Activated B cell treated with CpG ODN at 0.5 μM for 24 hours (primary cell): ENCODE measurements at regions of chr10 and their contacts with region 1.

Region 1: DNA sequence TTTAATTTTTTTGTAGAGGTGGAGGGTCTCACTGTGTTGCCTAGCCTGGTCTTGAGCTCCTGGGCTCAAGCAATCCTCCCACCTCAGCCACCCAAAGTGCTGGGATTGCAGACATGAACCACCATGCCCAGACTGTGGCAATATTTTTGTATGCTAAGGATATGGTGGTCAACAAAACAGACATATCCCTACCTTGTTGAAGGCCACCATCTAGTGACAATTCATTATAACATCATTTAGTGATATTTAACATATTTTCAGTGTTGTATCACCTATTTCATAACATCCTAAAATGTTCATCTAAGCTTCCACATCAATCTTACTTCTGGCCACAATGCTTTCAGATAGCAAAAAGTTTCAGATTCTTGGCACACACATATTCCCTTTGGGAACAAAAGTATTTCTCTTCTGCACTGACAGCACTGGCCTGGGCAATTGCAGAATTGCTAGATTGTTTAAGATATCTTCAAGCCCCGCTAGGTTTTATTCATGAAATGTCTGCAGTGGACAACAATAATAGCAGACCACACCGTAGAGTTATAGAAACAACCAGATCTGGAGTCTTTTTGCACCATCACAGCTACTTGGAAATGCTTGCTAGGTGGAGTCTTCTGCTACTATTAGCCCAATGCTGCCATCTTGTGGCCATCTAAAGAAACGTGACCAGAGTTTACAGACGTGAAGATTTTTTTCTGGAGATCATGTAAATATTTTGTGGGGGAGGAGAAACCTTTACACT is 58.4 kb downstream of the DNAJC12 start:
- DNase-seq: no peak
- ATAC-seq: peak; percentile 83
- H3K4me3 Mint-ChIP-seq: no peak overlapping the region
- H3K27ac Mint-ChIP-seq: peak overlapping the region; percentile 0
- H3K4me1 Mint-ChIP-seq: peaks cover 36% of the 10 kb centered on the region
- H3K27me3 Mint-ChIP-seq: no peaks in the 10 kb centered on the region
- CTCF ChIP-seq: no peak

Region 2: DNA sequence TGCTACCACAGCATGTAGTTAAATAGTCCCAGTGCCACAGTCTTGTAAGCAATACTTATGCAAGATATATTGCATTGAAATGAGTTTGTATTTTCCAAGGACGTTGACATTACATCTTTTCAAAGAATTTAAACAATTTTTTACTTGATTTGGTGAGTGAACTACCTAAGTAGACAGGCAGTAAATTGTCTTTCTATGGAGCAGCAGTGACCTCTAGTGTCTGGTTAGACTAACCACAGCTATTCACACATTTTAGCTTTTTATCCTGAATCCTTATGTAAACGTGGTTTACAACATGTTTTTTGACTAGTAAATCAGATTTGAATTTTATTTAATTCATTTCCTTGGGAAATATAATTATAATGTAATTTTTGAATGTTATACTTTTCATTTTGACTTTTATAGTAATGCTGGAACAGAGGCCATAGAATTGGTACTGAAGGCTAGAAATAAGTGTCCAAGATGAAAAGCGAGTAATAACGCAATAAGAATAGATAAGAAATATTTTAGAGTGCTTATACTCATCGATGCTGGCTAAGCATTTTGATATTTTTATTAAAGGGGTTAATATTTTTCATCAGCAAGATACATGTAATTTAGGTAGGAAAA is 848.2 kb before region 1 on chr10:
- CTCF ChIA-PET with region 1: interaction called, 3 read pairs
- POLR2A ChIA-PET with region 1: no interaction called
- intact Hi-C with region 1: loop called (anchors 5 kb)
- DNase-seq: no peak
- ATAC-seq: no peak
- H3K4me3 Mint-ChIP-seq: no peak overlapping the region
- H3K27ac Mint-ChIP-seq: no peak overlapping the region
- H3K4me1 Mint-ChIP-seq: no peaks in the 10 kb centered on the region
- H3K27me3 Mint-ChIP-seq: peaks cover 21% of the 10 kb centered on the region
- CTCF ChIP-seq: peak; percentile 85

Region 3: DNA sequence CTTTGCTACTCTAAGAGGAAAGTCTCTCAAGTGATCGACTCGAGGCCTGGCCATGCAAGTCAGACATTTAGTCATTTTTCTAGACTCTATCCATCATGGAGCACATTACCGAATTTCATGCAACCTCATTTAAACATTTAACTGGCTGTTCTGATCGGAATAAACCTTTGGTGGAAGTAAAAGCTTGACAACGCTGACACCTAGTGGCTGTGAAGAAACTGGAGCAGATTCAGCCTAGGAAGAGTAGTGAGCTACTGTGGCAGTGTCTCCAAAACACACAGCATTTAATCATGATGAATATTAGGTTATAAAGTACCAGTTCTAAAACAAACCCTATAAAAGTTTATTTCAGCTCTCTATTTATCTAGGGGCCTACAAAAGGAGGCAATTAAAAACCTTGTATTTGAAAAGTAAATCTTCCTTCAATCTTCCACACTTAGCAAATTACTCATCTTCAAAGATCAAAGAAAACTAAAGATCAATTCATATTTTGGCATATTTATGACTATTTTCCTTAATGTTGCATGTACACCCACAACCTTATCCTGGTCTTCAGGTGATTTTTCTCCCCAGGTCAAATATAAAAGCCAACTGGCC is 258.6 kb before region 1 on chr10:
- CTCF ChIA-PET with region 1: interaction called, 3 read pairs
- POLR2A ChIA-PET with region 1: no interaction called
- intact Hi-C with region 1: loop called (anchors 2 kb)
- DNase-seq: no peak
- ATAC-seq: no peak
- H3K4me3 Mint-ChIP-seq: no peak overlapping the region
- H3K27ac Mint-ChIP-seq: no peak overlapping the region
- H3K4me1 Mint-ChIP-seq: no peaks in the 10 kb centered on the region
- H3K27me3 Mint-ChIP-seq: no peaks in the 10 kb centered on the region
- CTCF ChIP-seq: no peak

Region 4: DNA sequence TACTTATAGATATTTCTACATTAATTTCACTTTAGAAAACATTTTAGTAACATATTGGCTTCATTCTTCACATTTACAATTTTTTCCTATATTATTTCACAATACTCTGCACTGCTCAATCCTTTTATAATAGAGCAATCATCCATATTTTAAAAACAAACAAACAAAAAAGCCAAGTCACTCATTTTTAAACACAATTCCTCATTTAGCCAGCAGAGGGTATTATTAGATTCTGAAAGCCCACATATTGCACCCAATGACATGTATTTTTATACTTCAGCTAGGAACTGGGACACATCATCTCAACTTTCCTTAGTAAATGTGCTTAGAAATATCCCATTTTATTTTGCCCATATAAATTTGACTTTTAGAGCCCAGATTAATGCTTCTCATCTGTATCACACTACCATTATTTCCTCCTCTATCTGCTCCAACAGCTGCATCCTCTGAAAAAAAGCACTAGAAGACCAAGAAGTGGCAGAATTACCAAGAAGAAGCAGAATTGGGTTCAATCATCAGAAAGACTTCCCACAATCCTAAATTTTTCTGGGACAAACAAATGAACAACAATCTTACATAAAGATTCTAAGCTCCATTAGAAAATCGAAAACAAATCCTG is 113.1 kb before region 1 on chr10:
- CTCF ChIA-PET with region 1: interaction called, 80 read pairs
- POLR2A ChIA-PET with region 1: interaction called, 3 read pairs
- intact Hi-C with region 1: loop called (anchors 1 kb)
- DNase-seq: no peak
- ATAC-seq: no peak
- H3K4me3 Mint-ChIP-seq: no peak overlapping the region
- H3K27ac Mint-ChIP-seq: no peak overlapping the region
- H3K4me1 Mint-ChIP-seq: no peaks in the 10 kb centered on the region
- H3K27me3 Mint-ChIP-seq: peaks cover 3% of the 10 kb centered on the region
- CTCF ChIP-seq: no peak

Region 5: DNA sequence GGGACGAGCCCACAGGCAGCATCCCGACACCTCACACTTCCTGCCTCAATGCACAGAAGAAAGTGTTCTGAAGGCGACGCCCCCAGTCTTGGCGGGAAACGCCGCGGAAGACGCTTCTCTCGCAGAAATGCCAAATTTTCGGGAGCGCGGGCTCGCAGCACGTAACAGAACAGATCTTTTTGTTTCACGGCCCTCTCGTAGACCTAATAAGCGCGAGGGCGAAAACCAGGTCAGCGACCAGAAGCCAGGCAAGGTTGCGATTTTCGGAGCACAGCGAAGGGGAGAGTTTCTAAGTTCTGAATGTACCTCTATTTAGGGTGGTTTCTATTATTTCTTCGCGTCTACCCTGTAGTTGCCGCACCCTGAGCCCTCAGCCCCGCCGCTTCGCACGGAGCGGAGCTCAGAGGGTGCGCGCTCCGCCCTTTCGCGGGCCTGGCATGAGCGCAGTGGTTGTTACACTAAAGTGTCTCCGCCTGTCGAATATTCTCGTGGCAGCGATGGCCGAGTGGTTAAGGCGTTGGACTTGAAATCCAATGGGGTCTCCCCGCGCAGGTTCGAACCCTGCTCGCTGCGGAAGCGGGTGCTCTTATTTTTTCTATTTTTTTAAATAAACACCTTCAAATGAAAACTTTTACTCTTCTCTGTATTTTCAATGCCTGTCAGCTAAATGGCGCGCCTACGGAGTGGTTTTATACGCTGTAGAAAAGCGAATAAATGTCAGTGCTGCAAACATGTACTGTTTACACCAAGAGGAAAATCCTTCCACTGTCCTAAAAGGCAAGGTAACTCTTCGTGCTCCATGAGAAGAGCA is 15.4 kb before region 1 on chr10:
- CTCF ChIA-PET with region 1: interaction called, 13 read pairs
- POLR2A ChIA-PET with region 1: interaction called, 10 read pairs
- intact Hi-C with region 1: loop called (anchors 1 kb)
- DNase-seq: peak; percentile 98
- ATAC-seq: peak; percentile 78
- H3K4me3 Mint-ChIP-seq: peak overlapping the region; percentile 94
- H3K27ac Mint-ChIP-seq: peak overlapping the region; percentile 99
- H3K4me1 Mint-ChIP-seq: peaks cover 31% of the 10 kb centered on the region
- H3K27me3 Mint-ChIP-seq: peaks cover 4% of the 10 kb centered on the region
- CTCF ChIP-seq: no peak